Brain microvascular endothelial cell (primary cell): ENCODE measurements at regions of chr6 and their contacts with region 1.

Region 1: GRCh38 chr6:159633196-159633595 is 59.8 kb downstream of the SOD2 start:
- DNase-seq: peak; percentile 37
- H3K4me3 ChIP-seq: no peak overlapping the region
- H3K27ac ChIP-seq: no peak overlapping the region
- H3K27me3 ChIP-seq: no peaks in the 10 kb centered on the region
- CTCF ChIP-seq: peak; percentile 73

Region 2: DNA sequence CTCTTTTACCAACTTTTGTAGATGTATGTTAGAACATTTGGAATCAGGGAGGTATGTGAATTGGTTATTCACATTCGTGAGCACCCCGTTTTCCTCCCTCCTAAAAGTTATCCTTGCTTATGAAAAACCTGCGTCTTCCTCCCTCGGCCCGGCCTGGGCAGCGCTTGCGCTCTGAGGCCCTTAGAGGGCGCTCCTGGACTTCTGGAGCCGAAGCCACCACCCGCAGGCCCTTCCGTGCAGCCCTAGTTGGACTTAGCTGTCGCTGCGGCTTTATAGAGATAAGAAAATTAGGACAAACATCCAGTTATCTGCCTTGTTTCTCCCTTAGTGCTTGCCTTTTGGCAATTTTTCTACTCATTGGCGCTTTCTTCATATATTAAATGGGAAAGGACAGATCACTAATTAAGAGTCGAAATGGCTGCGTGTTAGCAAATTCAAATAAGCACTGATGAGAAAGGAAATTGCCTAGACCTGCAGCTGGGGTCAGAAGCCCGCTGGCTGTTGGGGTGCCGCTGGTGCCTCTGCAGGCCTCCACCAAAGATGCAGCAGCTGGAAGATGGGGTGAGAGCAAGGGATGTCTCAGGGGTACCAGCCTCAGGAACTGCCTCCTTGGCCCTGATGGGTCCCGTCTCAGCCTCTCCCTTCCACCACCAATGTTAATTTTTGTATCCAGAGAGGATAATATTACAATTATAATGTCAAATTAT is 458.8 kb before region 1 on chr6:
- in situ Hi-C with region 1: loop called (anchors 25 kb)
- DNase-seq: peak; percentile 77
- H3K4me3 ChIP-seq: no peak overlapping the region
- H3K27ac ChIP-seq: no peak overlapping the region
- H3K27me3 ChIP-seq: peaks cover 4% of the 10 kb centered on the region
- CTCF ChIP-seq: peak; percentile 99